HEK293 (cell line): ENCODE measurements at regions of chr6 and their contacts with region 1.

Region 1: GRCh38 chr6:18990059-18990978 is 603.2 kb downstream of the RNF144B start:
- H3K4me3 ChIP-seq: peak overlapping the region; percentile 23
- H3K27ac ChIP-seq: no peak overlapping the region
- H3K4me1 ChIP-seq: no peaks in the 10 kb centered on the region
- CTCF ChIP-seq: no peak

Region 2: GRCh38 chr6:18720075-18720474 is 270.2 kb before region 1 on chr6:
- CTCF ChIA-PET with region 1: no interaction called
- POLR2A ChIA-PET with region 1: no interaction called
- H3K4me3 ChIP-seq: no peak overlapping the region
- H3K27ac ChIP-seq: no peak overlapping the region
- H3K4me1 ChIP-seq: no peaks in the 10 kb centered on the region
- CTCF ChIP-seq: no peak

Region 3: DNA sequence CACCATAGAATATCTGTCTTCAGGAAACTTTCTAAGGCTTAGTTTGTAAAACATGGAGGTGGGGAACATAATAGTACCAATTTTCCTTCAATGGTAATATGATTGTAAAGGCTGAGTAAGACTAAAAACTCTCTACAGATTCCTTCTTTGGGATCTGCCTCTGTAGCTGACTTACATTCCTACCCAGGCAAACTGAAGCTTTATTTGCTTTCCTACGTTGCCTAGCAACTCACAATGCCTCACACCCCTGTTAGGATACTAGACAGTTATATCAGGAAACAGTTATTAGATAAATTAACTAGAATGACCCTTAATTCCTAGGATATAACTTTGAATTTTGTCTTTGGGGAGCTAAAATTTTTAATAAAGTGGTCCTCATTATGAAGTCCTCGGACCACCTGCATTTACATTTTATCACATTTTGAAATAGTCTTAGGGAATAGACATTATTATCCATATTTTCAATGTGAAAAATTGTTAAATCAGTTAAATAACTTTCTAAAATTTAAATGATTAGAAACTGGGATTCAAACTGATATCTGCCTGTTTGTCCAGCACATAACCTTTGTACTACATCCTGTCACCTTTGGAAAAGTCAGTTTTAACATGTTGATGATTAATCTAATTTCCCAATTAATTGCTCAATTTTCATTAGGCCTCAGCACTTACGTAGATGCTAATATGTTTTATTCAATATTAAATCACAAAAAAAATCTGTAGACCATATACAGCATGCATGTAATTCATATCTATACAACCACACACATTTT is 11.8 kb before region 1 on chr6:
- CTCF ChIA-PET with region 1: interaction called, 22 read pairs
- POLR2A ChIA-PET with region 1: no interaction called
- H3K4me3 ChIP-seq: no peak overlapping the region
- H3K27ac ChIP-seq: no peak overlapping the region
- H3K4me1 ChIP-seq: peaks cover 5% of the 10 kb centered on the region; the same call in 1 of the 2 replicates
- CTCF ChIP-seq: no peak

Region 4: DNA sequence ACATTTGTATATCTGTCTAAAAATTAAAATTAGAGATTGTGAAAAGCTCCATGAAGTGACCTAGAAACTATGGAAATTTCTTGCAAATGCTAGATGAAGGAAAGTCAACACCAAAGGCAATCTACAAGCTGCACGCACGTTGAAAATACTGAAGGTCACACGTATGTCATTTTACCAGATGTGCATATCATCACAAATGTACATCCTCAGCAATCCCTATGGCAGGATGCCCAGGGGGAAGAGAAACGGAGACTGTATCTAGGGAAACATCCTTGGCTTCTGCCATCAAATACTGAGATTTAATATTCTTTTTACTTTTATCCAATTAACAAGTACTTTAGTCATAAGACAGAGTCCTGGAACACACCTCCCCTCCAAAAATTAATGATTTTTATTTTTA is 68.8 kb after region 1 on chr6:
- CTCF ChIA-PET with region 1: no interaction called
- POLR2A ChIA-PET with region 1: no interaction called
- H3K4me3 ChIP-seq: no peak overlapping the region
- H3K27ac ChIP-seq: no peak overlapping the region
- H3K4me1 ChIP-seq: no peaks in the 10 kb centered on the region
- CTCF ChIP-seq: no peak

Region 5: GRCh38 chr6:19851241-19852089 is 861.1 kb after region 1 on chr6:
- CTCF ChIA-PET with region 1: interaction called, 12 read pairs
- POLR2A ChIA-PET with region 1: no interaction called
- H3K4me3 ChIP-seq: no peak overlapping the region
- H3K27ac ChIP-seq: peak overlapping the region; percentile 54; the same call in 1 of the 2 replicates
- H3K4me1 ChIP-seq: peaks cover 13% of the 10 kb centered on the region
- CTCF ChIP-seq: peak; percentile 65